Natural killer cell (primary cell): ENCODE measurements at regions of chr1 and their contacts with region 1.

Region 1: DNA sequence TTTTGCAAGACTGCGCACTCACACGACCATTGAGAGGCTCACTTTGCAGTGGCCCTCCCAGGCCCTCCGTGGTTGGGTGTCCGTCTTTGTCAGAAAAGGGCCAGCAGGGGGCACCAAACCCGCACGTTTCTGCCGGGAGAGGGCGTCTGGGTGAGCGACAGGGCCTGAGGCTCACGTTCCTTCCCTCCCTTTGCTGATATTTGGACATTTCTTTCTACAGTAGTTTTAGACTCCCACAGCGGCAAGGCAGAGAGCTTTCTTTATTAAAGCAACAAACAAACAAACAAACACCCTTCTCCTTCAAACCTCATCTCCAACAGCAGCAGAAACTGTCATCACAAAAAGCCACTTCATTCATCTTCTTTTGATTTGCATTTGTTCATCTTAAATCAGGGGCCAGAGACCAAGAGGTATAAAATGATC is 79.2 kb upstream of the WDR26 start:
- DNase-seq: peak; percentile 76 to 88
- ATAC-seq: peak; percentile 87 to 99 (median 99)
- H3K4me3 ChIP-seq: no peak overlapping the region
- H3K4me3 Mint-ChIP-seq: no peak overlapping the region
- H3K27ac ChIP-seq: no peak overlapping the region
- H3K27ac Mint-ChIP-seq: no peak overlapping the region
- H3K4me1 ChIP-seq: no peaks in the 10 kb centered on the region
- H3K4me1 Mint-ChIP-seq: peaks cover 6 to 7% of the 10 kb centered on the region in 2 donors
- H3K27me3 ChIP-seq: no peaks in the 10 kb centered on the region
- H3K27me3 Mint-ChIP-seq: no peaks in the 10 kb centered on the region
- CTCF ChIP-seq: peak; percentile 88

Region 2: DNA sequence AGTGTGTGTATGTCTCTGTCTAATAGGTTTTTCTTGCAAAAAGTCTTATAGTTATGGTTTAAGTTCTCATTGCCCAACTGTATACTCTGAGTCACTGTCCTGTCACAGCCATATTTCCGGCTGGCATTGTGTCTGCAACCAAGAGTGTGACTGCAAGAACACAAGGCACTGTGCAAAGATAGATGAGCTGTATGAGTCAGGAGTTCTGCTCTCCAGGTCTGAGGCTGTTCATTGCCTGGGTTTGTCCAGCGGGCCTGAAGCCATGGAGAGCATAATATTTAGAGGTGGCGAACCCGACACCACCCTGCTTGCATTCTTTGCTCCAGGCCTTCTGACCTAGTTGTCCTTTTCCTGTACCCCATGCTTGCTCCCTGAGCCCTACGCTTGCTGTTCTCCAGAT is 51.4 kb after region 1 on chr1:
- intact Hi-C with region 1: loop called (anchors 2 kb)
- DNase-seq: peak in 1 of 2 donors; percentile 5
- ATAC-seq: peak in 2 of 3 donors; percentile 41 to 47
- H3K4me3 ChIP-seq: no peak overlapping the region
- H3K4me3 Mint-ChIP-seq: no peak overlapping the region
- H3K27ac ChIP-seq: no peak overlapping the region
- H3K27ac Mint-ChIP-seq: no peak overlapping the region
- H3K4me1 ChIP-seq: no peaks in the 10 kb centered on the region
- H3K4me1 Mint-ChIP-seq: no peaks in the 10 kb centered on the region
- H3K27me3 ChIP-seq: no peaks in the 10 kb centered on the region
- H3K27me3 Mint-ChIP-seq: peaks cover 0 to 5% of the 10 kb centered on the region in 2 donors
- CTCF ChIP-seq: no peak

Region 3: DNA sequence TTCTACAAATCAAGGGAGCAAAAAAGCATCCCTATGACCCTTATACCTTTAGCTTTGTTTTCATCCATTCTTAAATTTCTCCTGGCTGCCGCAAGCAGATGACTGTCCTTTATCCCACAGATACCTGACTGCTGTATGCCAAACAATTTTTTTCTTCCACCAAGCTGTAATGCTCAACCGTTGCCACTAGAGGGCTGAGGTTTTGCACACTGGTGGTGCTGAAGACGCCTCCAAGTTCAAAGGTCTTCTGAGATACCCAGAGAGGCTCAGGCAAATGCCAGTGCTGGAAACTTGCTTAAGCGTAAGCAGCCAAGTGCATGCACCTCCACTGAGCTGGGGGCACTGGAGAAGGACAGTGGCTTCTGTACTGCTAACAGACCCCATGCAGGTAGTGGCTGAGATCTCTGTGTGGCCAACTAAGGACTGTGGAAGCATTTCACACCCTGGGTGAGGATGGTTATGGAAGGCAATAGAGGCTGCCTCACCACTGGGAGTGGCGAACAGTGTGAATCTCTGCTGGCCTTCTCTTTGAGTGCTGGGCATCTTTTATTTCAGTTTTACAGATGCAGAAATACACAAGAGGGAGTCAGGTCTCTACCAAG is 130.9 kb after region 1 on chr1:
- intact Hi-C with region 1: loop called (anchors 10 kb)
- DNase-seq: peak; percentile 29 to 81
- ATAC-seq: peak; percentile 65 to 89 (median 83)
- H3K4me3 ChIP-seq: no peak overlapping the region
- H3K4me3 Mint-ChIP-seq: no peak overlapping the region
- H3K27ac ChIP-seq: no peak overlapping the region
- H3K27ac Mint-ChIP-seq: no peak overlapping the region
- H3K4me1 ChIP-seq: no peaks in the 10 kb centered on the region
- H3K4me1 Mint-ChIP-seq: peaks cover 0 to 4% of the 10 kb centered on the region in 2 donors
- H3K27me3 ChIP-seq: no peaks in the 10 kb centered on the region
- H3K27me3 Mint-ChIP-seq: peaks cover 4 to 6% of the 10 kb centered on the region in 2 donors
- CTCF ChIP-seq: peak; percentile 94

Region 4: DNA sequence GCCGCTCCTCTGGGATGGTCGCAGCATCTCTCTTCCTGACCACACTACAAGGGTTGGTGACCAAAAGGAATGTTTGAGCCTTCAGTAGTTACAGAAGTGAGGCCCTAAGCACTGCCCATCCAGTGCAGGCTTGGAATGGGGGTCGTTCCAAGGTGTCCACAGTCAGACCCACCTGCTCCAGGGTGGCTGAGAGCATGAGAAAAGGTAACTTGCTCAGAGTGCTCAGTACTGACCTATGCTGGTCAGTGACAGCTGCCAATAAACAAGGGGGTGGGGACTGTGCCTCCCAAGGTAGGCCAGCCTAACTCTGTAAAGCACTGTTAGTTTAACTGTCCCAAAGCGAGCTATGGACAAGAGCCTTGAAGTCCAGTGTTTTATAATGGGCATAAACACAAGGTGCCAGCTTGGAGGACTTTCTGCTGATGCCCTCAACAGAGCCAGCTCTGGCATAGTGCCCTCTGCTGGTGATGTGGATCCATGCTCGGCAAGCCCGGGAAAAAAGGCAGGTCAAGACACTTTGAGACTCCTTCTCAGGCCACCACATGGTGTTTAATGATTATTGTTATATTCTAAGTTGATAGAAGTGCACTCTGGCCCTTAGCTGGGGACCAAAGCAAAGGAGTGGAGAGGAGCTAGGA is 337.5 kb after region 1 on chr1:
- intact Hi-C with region 1: loop called (anchors 1 kb)
- DNase-seq: peak; percentile 24 to 65
- ATAC-seq: peak in 2 of 3 donors; percentile 45 to 50
- H3K4me3 ChIP-seq: no peak overlapping the region
- H3K4me3 Mint-ChIP-seq: no peak overlapping the region
- H3K27ac ChIP-seq: no peak overlapping the region
- H3K27ac Mint-ChIP-seq: no peak overlapping the region
- H3K4me1 ChIP-seq: no peaks in the 10 kb centered on the region
- H3K4me1 Mint-ChIP-seq: no peaks in the 10 kb centered on the region
- H3K27me3 ChIP-seq: no peaks in the 10 kb centered on the region
- H3K27me3 Mint-ChIP-seq: peaks cover 0 to 3% of the 10 kb centered on the region in 2 donors
- CTCF ChIP-seq: peak; percentile 42